ENCODE measurements at regions of chr9 and their contacts with region 1.

Region 1: GRCh38 chr9:1009101-1009707 is 32.7 kb downstream of the DMRT3 start:
- DNase-seq: peak; percentile 50 to 72 (median 61)
- H3K4me3 ChIP-seq: no peak overlapping the region
- H3K4me3 Mint-ChIP-seq: no peak overlapping the region
- H3K27ac ChIP-seq: no peak overlapping the region
- H3K27ac Mint-ChIP-seq: no peak overlapping the region
- H3K4me1 ChIP-seq: no peaks in the 10 kb centered on the region
- H3K4me1 Mint-ChIP-seq: peaks cover 0 to 10% (median 4%) of the 10 kb centered on the region in 4 donors
- H3K27me3 ChIP-seq: peaks cover 4% of the 10 kb centered on the region
- H3K27me3 Mint-ChIP-seq: peaks cover 9 to 27% of the 10 kb centered on the region in 2 donors

Region 2: DNA sequence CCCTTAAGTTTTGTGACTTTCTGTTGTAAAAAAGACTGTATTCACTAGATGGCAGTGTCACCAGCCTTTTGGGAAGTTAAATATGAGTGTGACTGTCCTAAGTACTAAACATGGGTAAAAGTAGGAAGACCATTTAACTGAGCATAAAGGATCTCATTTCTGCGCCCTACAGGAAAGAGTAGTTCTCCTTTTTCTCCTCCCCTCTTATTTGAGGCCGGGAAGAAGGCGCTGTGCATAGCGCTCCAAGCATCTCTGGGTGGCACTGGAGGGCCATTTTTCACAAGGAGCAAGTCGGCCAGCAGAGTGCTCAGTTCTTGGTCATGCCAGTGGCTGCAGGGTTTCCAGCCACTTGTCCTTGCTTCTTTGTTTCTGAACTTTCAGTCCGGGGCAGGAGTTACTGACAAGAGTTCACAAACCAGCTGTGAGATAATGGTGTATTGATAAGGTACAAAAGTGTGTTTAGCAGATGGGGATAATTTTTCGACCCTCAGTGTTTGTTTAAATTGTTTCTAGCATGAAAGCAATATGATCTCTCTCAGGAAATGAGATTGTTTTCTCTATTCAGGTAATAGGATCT is 395.3 kb before region 1 on chr9:
- CTCF ChIA-PET with region 1: interaction called, 4 read pairs
- POLR2A ChIA-PET with region 1: no interaction called
- intact Hi-C with region 1: loop called (anchors 5 kb)
- DNase-seq: peak in 4 of 5 donors; percentile 5 to 15 (median 8)
- H3K4me3 ChIP-seq: no peak overlapping the region
- H3K4me3 Mint-ChIP-seq: no peak overlapping the region
- H3K27ac ChIP-seq: no peak overlapping the region
- H3K27ac Mint-ChIP-seq: peak overlapping the region in 1 of 7 donors; percentile 37
- H3K4me1 ChIP-seq: no peaks in the 10 kb centered on the region
- H3K4me1 Mint-ChIP-seq: peaks cover 0 to 5% (median 3%) of the 10 kb centered on the region in 4 donors
- H3K27me3 ChIP-seq: no peaks in the 10 kb centered on the region
- H3K27me3 Mint-ChIP-seq: peaks cover 2% of the 10 kb centered on the region in 2 donors

Region 3: DNA sequence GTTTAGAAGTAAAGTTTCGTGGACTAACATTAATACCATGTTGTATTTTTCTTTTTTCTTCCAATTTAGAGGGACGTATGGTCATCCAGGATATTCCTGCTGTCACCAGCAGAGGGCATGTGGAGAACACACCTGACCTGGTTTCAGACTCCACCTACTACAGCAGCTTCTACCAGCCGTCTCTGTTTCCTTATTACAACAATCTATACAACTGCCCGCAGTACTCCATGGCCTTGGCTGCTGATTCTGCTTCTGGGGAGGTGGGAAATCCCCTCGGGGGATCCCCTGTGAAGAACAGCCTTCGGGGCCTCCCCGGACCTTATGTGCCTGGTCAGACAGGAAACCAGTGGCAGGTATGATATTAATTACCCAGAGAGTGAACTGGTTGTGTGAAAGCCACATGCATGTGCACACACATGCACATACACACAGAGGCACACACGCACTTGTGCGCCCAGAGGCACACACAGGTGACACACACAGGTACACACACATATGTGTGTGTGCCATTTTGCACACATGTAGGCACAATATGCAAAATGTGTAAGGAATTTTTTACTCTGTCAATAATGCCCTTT is 115.3 kb before region 1 on chr9:
- CTCF ChIA-PET with region 1: interaction called, 68 read pairs
- POLR2A ChIA-PET with region 1: no interaction called
- intact Hi-C with region 1: no loop called
- DNase-seq: peak; percentile 47 to 70 (median 58)
- H3K4me3 ChIP-seq: no peak overlapping the region
- H3K4me3 Mint-ChIP-seq: peak overlapping the region in 7 of 8 donors; percentile 3 to 78 (median 64)
- H3K27ac ChIP-seq: no peak overlapping the region
- H3K27ac Mint-ChIP-seq: peak overlapping the region in 4 of 7 donors; percentile 40 to 84 (median 74)
- H3K4me1 ChIP-seq: peaks cover 11% of the 10 kb centered on the region
- H3K4me1 Mint-ChIP-seq: peaks cover 6 to 12% (median 10%) of the 10 kb centered on the region in 4 donors
- H3K27me3 ChIP-seq: no peaks in the 10 kb centered on the region
- H3K27me3 Mint-ChIP-seq: peaks cover 2 to 7% of the 10 kb centered on the region in 2 donors

Measured in CD4-positive, alpha-beta memory T cell (primary cell).